PC-3 (cell line): ENCODE measurements at regions of chr14 and their contacts with region 1.

Region 1: GRCh38 chr14:100988411-100988900 is 84.9 kb upstream of the RTL1 start:
- DNase-seq: peak; percentile 94
- ATAC-seq: peak; percentile 95
- H3K4me3 ChIP-seq: no peak overlapping the region
- H3K27ac ChIP-seq: peak overlapping the region; percentile 98
- H3K4me1 ChIP-seq: peaks cover 48% of the 10 kb centered on the region
- H3K27me3 ChIP-seq: no peaks in the 10 kb centered on the region
- CTCF ChIP-seq: no peak

Region 2: GRCh38 chr14:100761481-100761880 is 227.0 kb before region 1 on chr14:
- CTCF ChIA-PET with region 1: no interaction called
- POLR2A ChIA-PET with region 1: no interaction called
- intact Hi-C with region 1: loop called (anchors 10 kb)
- DNase-seq: peak; percentile 84
- ATAC-seq: peak; percentile 98
- H3K4me3 ChIP-seq: no peak overlapping the region
- H3K27ac ChIP-seq: peak overlapping the region; percentile 55
- H3K4me1 ChIP-seq: peaks cover 18% of the 10 kb centered on the region
- H3K27me3 ChIP-seq: no peaks in the 10 kb centered on the region; the same call in 1 of the 2 replicates
- CTCF ChIP-seq: no peak

Region 3: DNA sequence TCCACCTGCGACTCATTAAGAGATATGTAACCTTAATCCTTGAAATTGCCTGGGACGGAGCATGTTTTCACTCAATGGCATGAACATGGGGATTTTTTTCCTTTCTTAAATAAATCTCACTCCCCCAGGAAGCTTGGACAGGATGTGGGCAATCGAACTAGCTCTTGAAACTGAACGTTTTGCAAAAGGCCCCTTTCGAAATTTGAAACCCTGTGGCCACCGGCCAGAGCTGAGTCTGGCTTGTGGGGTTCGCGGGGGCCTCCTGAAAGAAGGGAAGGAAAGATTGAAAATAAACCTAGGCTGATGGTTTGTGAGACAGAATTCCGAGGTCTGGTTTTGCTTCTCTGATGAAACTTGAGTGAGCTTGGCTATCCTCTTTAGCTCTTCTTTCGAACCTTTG is 16.5 kb after region 1 on chr14:
- CTCF ChIA-PET with region 1: no interaction called
- POLR2A ChIA-PET with region 1: no interaction called
- intact Hi-C with region 1: no loop called
- DNase-seq: no peak
- ATAC-seq: no peak
- H3K4me3 ChIP-seq: no peak overlapping the region
- H3K27ac ChIP-seq: no peak overlapping the region
- H3K4me1 ChIP-seq: peaks cover 16% of the 10 kb centered on the region
- H3K27me3 ChIP-seq: no peaks in the 10 kb centered on the region
- CTCF ChIP-seq: no peak

Region 4: GRCh38 chr14:101058571-101058970 is 70.1 kb after region 1 on chr14:
- CTCF ChIA-PET with region 1: no interaction called
- POLR2A ChIA-PET with region 1: no interaction called
- intact Hi-C with region 1: loop called (anchors 5 kb)
- DNase-seq: peak; percentile 48
- ATAC-seq: peak; percentile 53
- H3K4me3 ChIP-seq: no peak overlapping the region
- H3K27ac ChIP-seq: peak overlapping the region; percentile 33
- H3K4me1 ChIP-seq: peaks cover 19% of the 10 kb centered on the region
- H3K27me3 ChIP-seq: no peaks in the 10 kb centered on the region
- CTCF ChIP-seq: no peak

Region 5: DNA sequence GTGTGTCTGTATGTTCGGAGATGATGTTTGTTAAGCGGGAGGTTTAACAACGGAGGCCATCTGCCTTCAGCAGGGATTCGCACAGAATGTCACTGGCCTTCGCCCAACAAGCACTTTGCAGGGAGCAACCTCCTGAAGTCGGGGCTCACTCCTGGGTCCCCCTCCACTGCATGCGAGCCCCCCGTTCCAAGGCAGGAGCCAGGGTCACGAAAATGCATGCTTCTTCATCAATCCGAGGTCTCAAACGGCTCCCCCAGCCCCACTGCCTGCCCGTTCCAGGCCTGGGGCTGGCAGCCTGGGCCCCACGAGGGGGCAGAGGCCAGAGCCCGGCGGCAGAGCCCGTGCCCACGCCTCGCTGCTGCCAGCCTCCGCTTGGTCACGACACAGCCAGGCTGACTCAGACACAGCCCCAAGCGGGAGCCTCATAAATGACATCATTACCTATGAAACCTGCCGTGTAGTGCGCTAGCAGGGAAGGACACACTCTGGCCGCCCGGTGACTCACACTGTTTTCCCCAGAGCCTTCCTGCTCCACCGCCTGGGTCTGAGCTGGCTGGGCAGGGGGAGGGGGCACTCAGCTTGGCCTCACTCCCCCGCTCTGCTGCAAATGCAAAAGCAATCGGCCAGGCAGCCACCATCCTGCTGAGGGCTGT is 84.6 kb after region 1 on chr14:
- CTCF ChIA-PET with region 1: no interaction called
- POLR2A ChIA-PET with region 1: no interaction called
- intact Hi-C with region 1: loop called (anchors 5 kb)
- DNase-seq: peak; percentile 99
- ATAC-seq: peak; percentile 96
- H3K4me3 ChIP-seq: no peak overlapping the region; the same call in 1 of the 2 replicates
- H3K27ac ChIP-seq: peak overlapping the region; percentile 87
- H3K4me1 ChIP-seq: peaks cover 25% of the 10 kb centered on the region
- H3K27me3 ChIP-seq: no peaks in the 10 kb centered on the region
- CTCF ChIP-seq: peak; percentile 37